ENCODE measurements at regions of chr7 and their contacts with region 1.

Region 1: GRCh38 chr7:148940702-148941597 is 56.9 kb upstream of the EZH2 start:
- DNase-seq: peak; percentile 88 to 91
- ATAC-seq: peak; percentile 94
- H3K4me3 ChIP-seq: peak overlapping the region; percentile 79 to 95
- H3K27ac ChIP-seq: peak overlapping the region in 1 of 2 donors; percentile 55
- H3K4me1 ChIP-seq: no peaks in the 10 kb centered on the region
- H3K27me3 ChIP-seq: no peaks in the 10 kb centered on the region

Region 2: GRCh38 chr7:148884299-148885022 is 56.5 kb before region 1 on chr7:
- intact Hi-C with region 1: loop called (anchors 2 kb)
- DNase-seq: peak; percentile 95 to 97
- ATAC-seq: peak; percentile 99
- H3K4me3 ChIP-seq: peak overlapping the region; percentile 68 to 98
- H3K27ac ChIP-seq: peak overlapping the region in 1 of 2 donors; percentile 81
- H3K4me1 ChIP-seq: no peaks in the 10 kb centered on the region
- H3K27me3 ChIP-seq: no peaks in the 10 kb centered on the region

Region 3: DNA sequence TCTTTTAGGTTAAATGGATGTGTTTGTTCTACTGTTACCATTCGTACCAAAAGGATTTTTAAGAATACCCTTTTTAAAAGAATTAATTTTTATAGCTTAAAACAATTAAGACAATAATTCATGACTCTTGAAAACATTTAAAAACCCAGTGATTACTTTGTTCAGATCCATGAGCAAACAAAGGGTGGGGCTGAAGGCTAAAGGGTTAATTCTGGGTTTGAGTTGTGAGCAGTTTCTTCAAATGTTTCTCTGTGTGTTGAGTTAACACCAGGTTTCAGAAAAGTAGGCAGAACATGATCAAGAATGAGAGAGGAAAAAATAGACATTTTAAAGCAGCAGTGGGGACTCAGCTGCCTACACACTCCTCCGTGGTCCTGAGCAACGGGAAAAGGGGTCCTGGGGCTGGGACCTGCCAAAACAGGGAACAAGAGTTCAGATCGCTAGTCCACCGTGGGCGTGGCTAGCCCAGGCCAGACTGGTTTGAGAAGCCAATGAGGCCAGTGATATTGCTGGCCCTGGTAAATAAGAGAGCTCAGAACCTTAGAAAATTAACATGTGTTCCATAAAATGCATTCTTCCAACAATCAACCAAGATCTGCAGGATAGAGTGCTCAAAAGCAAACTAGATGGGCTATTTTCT is 42.0 kb before region 1 on chr7:
- intact Hi-C with region 1: loop called in 1 of 2 experiments (anchors 5 kb)
- DNase-seq: peak in 1 of 2 donors; percentile 32
- ATAC-seq: no peak
- H3K4me3 ChIP-seq: no peak overlapping the region
- H3K27ac ChIP-seq: no peak overlapping the region
- H3K4me1 ChIP-seq: no peaks in the 10 kb centered on the region
- H3K27me3 ChIP-seq: no peaks in the 10 kb centered on the region

Region 4: DNA sequence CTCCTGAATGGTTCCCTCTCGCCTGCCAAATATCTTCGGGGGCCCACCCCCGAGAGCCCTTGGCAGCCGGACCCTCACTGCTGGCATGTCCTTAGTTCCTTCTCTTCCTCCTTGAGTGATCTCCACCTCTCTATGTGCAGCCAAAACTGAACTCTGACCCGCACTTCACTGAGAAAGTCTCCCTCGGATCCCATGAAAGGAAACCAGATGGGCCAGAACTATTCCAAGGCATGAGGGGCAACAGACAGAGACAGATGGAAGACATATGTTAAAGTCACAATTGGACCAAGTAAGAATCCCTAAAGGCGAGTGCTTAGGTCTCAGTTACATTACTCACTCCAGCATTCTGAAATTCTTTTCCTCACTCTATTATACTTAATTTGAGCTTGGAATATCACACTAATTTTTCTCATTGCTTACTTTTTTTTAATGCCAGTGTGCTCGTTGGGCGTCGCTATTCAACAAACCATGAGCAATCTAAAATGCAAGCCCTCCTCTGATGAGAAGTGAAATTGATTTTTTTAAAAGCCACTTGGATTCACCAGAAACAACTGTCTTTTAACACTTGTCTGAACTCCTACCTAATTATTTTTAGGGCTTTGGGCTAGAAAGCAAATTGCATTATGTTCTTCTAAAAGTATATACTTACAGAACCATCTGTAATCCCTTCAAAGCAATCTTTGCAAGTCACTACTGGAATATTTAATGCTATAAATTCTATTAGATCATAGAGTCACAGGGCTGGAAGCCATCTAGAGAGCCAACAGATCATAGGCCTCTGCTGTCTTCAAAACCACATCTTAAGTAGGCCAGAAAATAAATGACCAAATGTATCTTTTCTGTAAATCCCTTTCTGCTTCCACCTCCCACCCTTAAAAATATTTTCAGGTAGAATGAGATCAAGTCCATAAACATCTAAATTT is 13.6 kb before region 1 on chr7:
- intact Hi-C with region 1: no loop called
- DNase-seq: no peak
- ATAC-seq: no peak
- H3K4me3 ChIP-seq: no peak overlapping the region
- H3K27ac ChIP-seq: no peak overlapping the region
- H3K4me1 ChIP-seq: no peaks in the 10 kb centered on the region
- H3K27me3 ChIP-seq: no peaks in the 10 kb centered on the region

Measured in aorta (tissue), 5 donors.